ENCODE measurements at regions of chr11 and their contacts with region 1.

Region 1: GRCh38 chr11:4960877-4961276 is 5.4 kb upstream of the OR51A2 start:
- DNase-seq: no peak
- H3K4me3 Mint-ChIP-seq: no peak overlapping the region
- H3K27ac Mint-ChIP-seq: no peak overlapping the region
- H3K4me1 Mint-ChIP-seq: no peaks in the 10 kb centered on the region
- H3K27me3 Mint-ChIP-seq: no peaks in the 10 kb centered on the region
- CTCF ChIP-seq: no peak

Region 2: GRCh38 chr11:4947505-4947904 is 13.4 kb before region 1 on chr11 and contains the start of gene OR51A4:
- CTCF ChIA-PET with region 1: no interaction called
- intact Hi-C with region 1: loop called (anchors 1 kb)
- DNase-seq: no peak
- H3K4me3 Mint-ChIP-seq: no peak within 1 kb of the TSS
- H3K27ac Mint-ChIP-seq: no peak within 1 kb of the TSS
- H3K4me1 Mint-ChIP-seq: no peaks in the 10 kb centered on the region
- H3K27me3 Mint-ChIP-seq: no peaks in the 10 kb centered on the region
- CTCF ChIP-seq: no peak
- total RNA-seq, gene OR51A4: not detected in 2 replicates

Region 3: GRCh38 chr11:5129457-5129877 is 168.6 kb after region 1 on chr11:
- CTCF ChIA-PET with region 1: no interaction called
- intact Hi-C with region 1: no loop called
- DNase-seq: no peak
- H3K4me3 Mint-ChIP-seq: no peak overlapping the region
- H3K27ac Mint-ChIP-seq: no peak overlapping the region
- H3K4me1 Mint-ChIP-seq: no peaks in the 10 kb centered on the region
- H3K27me3 Mint-ChIP-seq: peaks cover 9% of the 10 kb centered on the region
- CTCF ChIP-seq: no peak

Region 4: DNA sequence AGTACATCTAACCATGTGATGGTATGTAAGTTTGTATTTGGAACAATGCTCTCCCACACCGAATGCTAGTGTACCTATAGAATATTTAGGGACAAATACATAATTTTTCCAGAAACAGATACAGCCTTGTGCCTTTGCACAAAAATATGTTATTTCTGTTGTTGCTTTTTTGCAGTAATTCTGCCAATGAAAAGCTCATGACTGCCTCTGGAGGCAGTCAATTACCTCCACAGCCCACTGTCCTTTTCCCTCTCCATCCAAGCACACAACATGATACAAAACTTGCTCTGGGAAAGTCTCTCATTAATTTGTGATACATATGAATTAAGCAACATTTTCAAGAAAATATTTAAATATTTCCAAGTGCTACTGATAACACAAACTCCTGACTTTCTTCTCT is 491.8 kb after region 1 on chr11:
- CTCF ChIA-PET with region 1: no interaction called
- intact Hi-C with region 1: no loop called
- DNase-seq: no peak
- H3K4me3 Mint-ChIP-seq: no peak overlapping the region
- H3K27ac Mint-ChIP-seq: no peak overlapping the region
- H3K4me1 Mint-ChIP-seq: no peaks in the 10 kb centered on the region
- H3K27me3 Mint-ChIP-seq: peaks cover 53% of the 10 kb centered on the region
- CTCF ChIP-seq: no peak

Measured in Calu3 (cell line).